Breast epithelium (tissue), 4 donors: ENCODE measurements at regions of chr7 and their contacts with region 1.

Region 1: DNA sequence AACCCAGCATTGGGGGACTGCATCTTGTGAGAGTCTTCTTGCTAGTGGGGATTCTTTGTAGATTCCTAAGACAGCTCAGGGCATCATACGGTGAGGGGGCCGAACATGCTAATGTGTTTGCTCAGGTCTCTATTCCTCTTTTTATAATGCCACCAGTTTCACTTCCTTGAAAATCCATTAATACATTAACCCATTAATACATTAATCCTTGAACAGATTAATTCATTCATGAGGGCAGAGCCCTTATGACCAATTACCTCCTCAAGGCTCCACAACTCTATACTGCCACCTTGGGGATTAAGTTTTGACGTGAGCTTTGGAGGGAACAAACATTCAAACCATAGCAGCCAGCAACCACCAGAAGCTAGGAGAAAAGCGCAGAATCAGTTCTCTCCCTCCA is 67.2 kb upstream of the POT1 start:
- DNase-seq: no peak
- H3K4me3 ChIP-seq: no peak overlapping the region
- H3K27ac ChIP-seq: no peak overlapping the region
- H3K4me1 ChIP-seq: no peaks in the 10 kb centered on the region
- H3K27me3 ChIP-seq: no peaks in the 10 kb centered on the region
- CTCF ChIP-seq: no peak
- POLR2A ChIP-seq: no peak

Region 2: GRCh38 chr7:123367484-123368122 is 1629.2 kb before region 1 on chr7:
- intact Hi-C with region 1: no loop called
- DNase-seq: no peak
- H3K4me3 ChIP-seq: no peak overlapping the region
- H3K27ac ChIP-seq: no peak overlapping the region
- H3K4me1 ChIP-seq: no peaks in the 10 kb centered on the region
- H3K27me3 ChIP-seq: no peaks in the 10 kb centered on the region
- CTCF ChIP-seq: peak in 2 of 3 donors; percentile 38 to 39
- POLR2A ChIP-seq: no peak

Region 3: DNA sequence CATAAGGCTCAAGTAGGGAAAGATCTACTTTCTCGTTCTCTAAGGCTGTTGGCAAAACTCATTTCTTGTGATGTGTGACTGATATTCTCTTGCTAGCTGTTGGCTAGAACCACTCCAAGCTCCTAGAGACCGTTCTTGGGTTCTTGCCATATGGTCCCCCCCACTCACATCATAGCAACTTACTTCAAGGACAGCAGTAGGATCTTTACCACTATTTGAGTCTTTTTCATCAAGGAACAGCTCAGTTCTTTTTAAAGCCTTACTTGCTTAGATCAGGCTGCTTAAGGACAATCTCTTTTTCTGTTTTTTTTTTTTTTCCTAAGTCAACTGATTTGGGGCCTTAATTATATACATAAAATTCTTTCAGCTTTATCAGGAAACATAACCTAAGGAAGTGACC is 482.3 kb before region 1 on chr7:
- intact Hi-C with region 1: loop called (anchors 5 kb)
- DNase-seq: no peak
- H3K4me3 ChIP-seq: no peak overlapping the region
- H3K27ac ChIP-seq: no peak overlapping the region
- H3K4me1 ChIP-seq: no peaks in the 10 kb centered on the region
- H3K27me3 ChIP-seq: no peaks in the 10 kb centered on the region
- CTCF ChIP-seq: no peak
- POLR2A ChIP-seq: no peak

Region 4: GRCh38 chr7:125007327-125007726 is 10.5 kb after region 1 on chr7:
- intact Hi-C with region 1: no loop called
- DNase-seq: no peak
- H3K4me3 ChIP-seq: no peak overlapping the region
- H3K27ac ChIP-seq: no peak overlapping the region
- H3K4me1 ChIP-seq: no peaks in the 10 kb centered on the region
- H3K27me3 ChIP-seq: no peaks in the 10 kb centered on the region
- CTCF ChIP-seq: no peak
- POLR2A ChIP-seq: no peak

Region 5: DNA sequence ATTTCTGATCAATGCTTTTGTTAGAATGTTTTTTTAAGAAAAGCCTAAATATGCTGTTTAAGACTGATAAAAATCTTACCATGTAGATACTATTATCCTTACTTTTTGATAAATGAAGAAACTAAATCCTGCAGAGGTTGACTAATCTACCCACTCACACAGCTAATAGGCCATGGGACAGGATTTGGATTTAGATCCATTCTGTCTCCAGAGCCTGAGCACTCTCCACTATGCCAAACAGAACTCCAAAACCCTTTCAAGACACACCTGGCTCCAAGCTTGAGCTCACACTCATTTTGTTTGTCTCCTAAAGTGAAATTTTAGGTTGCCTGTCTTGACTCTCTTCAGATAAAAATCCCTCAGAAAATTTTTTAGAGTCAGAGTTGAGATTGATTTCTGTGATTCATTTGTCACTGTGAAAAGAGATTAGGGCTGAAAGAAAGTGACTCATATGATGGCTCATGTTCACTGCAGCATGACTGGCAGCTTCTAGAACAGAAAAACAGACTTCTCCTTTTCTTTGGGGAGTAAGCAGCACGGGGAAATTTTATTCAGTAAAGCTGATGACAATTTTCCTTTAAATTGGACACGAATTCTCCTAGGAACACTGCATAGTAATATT is 65.1 kb after region 1 on chr7:
- intact Hi-C with region 1: no loop called
- DNase-seq: no peak
- H3K4me3 ChIP-seq: no peak overlapping the region
- H3K27ac ChIP-seq: no peak overlapping the region
- H3K4me1 ChIP-seq: no peaks in the 10 kb centered on the region
- H3K27me3 ChIP-seq: no peaks in the 10 kb centered on the region
- CTCF ChIP-seq: no peak
- POLR2A ChIP-seq: no peak